ENCODE measurements at regions of chr12 and their contacts with region 1.

Region 1: GRCh38 chr12:95815635-95816212 is 25.2 kb upstream of the NTN4 start:
- DNase-seq: no peak

Region 2: GRCh38 chr12:95182868-95183415 is 632.8 kb before region 1 on chr12:
- intact Hi-C with region 1: no loop called
- DNase-seq: no peak

Region 3: GRCh38 chr12:95582230-95583058 is 233.3 kb before region 1 on chr12:
- intact Hi-C with region 1: loop called (anchors 2 kb)
- DNase-seq: peak in 2 of 42 donors; percentile 6 to 13

Region 4: GRCh38 chr12:95623585-95624042 is 192.1 kb before region 1 on chr12:
- intact Hi-C with region 1: loop called (anchors 10 kb)
- DNase-seq: peak in 41 of 42 donors; percentile 12 to 81 (median 44)

Region 5: DNA sequence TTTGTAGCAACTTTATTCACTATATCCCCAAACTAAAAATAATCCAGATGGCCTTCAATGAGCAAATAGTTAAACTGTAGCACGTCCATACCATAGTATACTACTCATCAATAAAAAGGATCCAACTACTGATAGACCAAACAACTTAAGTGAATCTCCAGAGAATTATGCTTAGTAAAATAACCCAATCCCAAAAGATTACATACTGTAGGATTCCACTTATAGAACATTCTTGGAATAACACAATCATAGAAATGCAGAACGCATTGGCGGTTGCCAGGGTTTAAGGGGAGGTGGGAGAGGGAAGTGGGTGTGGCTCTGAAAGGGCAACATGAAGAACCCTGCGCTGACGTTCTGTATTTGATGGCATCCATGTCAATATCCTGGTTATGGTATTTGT is 71.6 kb after region 1 on chr12:
- intact Hi-C with region 1: no loop called
- DNase-seq: no peak

Region 6: DNA sequence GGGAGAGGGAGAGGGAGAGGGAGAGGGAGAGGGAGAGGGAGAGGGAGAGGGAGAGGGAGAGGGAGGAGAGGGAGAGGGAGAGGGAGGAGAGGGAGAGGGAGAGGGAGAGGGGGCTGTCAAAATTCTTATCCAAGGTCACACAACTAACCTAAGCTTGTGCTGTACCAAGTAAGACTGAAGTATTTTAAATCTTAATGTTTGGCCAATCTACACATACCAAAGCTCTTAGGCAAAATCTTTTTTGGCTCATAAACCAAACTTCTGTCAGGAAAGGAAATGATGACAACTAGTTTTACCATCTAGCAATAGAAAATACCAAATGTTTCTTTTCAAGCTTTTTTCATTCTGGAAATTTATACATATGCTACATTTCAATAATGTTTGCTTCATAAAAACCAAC is 92.8 kb after region 1 on chr12:
- intact Hi-C with region 1: no loop called
- DNase-seq: no peak

Measured in head of caudate nucleus (tissue), 42 donors.